ENCODE measurements at regions of chr16 and their contacts with region 1.

Region 1: DNA sequence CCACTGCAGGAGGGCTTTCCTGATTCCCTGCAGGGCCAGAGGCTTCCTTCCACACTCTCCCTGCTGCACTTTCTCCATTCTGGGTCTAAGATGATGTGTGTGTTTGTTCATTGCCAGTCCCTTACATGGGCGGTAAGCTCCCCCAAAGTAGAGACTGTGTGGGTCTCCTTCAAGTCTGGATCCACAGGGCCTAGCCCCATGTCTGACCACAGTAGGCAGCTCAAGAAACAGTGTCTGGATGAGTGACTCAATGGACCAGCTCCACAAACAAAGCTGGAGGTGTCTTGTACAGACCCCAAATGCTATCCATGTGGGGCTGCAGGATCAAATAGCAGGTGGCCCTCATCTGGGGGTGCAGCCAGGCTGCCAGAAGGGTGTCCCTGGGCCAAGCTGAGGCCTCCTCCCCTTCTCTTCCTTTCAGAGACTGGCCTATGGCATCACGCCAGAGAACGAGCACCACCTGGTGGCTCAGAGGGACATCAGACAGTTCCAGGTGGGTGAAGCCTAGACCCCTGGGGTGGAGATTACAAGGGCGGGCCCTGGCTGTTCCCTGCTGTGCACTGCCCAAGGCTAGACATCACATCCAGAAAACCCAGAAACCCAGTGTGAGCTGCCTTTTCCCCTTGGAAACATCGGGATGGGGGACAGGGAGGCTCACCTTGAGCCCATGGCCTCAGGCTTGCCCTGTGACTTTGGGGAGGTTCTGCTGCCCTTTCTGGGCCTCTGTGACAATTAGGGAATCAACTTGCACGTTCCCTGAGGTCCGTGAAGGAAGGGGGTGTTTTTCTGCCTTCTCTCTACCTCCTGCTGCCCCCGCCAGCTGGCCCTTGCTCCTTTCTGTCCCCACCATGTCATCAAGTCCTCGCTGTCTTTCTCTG is 45.9 kb downstream of the SLC6A2 start:
- DNase-seq: peak; percentile 38
- H3K4me3 ChIP-seq: no peak overlapping the region
- H3K27ac ChIP-seq: no peak overlapping the region
- H3K4me1 ChIP-seq: peaks cover 2% of the 10 kb centered on the region
- H3K27me3 ChIP-seq: no peaks in the 10 kb centered on the region
- CTCF ChIP-seq: peak; percentile 56 to 86

Region 2: GRCh38 chr16:55453909-55454308 is 247.8 kb before region 1 on chr16:
- CTCF ChIA-PET with region 1: no interaction called
- dilution Hi-C with region 1: no loop called
- in situ Hi-C with region 1: no loop called
- intact Hi-C with region 1: no loop called
- DNase-seq: no peak
- H3K4me3 ChIP-seq: no peak overlapping the region
- H3K27ac ChIP-seq: no peak overlapping the region
- H3K4me1 ChIP-seq: no peaks in the 10 kb centered on the region
- H3K27me3 ChIP-seq: no peaks in the 10 kb centered on the region
- CTCF ChIP-seq: no peak

Region 3: GRCh38 chr16:55494994-55495421 is 206.7 kb before region 1 on chr16:
- CTCF ChIA-PET with region 1: interaction called, 5 read pairs
- dilution Hi-C with region 1: no loop called
- in situ Hi-C with region 1: loop called in 1 of 2 experiments (anchors 5 kb)
- intact Hi-C with region 1: loop called (anchors 1 kb)
- DNase-seq: peak; percentile 70
- H3K4me3 ChIP-seq: no peak overlapping the region
- H3K27ac ChIP-seq: no peak overlapping the region
- H3K4me1 ChIP-seq: peaks cover 32% of the 10 kb centered on the region
- H3K27me3 ChIP-seq: no peaks in the 10 kb centered on the region
- CTCF ChIP-seq: peak; percentile 53 to 71

Region 4: GRCh38 chr16:55543472-55543871 is 158.2 kb before region 1 on chr16:
- CTCF ChIA-PET with region 1: interaction called, 3 read pairs
- dilution Hi-C with region 1: no loop called
- in situ Hi-C with region 1: loop called in 1 of 2 experiments (anchors 5 kb)
- intact Hi-C with region 1: loop called (anchors 1 kb)
- DNase-seq: no peak
- H3K4me3 ChIP-seq: no peak overlapping the region
- H3K27ac ChIP-seq: no peak overlapping the region
- H3K4me1 ChIP-seq: peaks cover 25% of the 10 kb centered on the region
- H3K27me3 ChIP-seq: no peaks in the 10 kb centered on the region
- CTCF ChIP-seq: peak; percentile 11 to 35

Region 5: DNA sequence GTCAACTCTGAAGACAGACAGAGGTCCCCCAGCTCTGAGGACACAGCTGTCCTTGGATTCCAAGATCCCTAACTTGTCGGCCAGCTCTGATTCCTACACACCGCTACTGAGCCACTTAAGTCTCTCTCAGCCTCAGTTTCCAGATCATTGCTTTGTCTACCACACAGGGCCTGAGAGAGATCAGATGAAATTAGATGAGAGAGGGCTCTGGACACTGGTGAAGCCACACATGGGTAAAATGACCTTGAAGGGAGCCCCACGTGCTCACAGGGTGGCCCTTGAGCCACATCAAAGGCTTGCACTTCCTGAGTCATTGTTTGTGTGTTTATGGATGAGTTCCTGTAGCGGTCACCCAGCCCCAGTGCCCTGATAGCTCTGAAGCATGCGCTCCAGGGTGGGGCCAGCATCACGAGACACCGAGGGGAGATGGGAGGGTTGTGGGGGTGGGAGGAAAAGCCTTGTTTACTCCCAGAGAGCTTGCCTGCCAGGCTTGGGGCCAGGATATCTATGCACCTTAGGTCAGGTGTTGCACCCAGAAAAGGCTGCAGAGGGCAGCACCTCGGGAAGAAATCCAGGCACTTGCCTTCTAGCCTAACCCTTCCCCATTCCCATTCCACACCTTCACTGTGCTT is 78.6 kb before region 1 on chr16:
- CTCF ChIA-PET with region 1: no interaction called
- dilution Hi-C with region 1: loop called (anchors 5 kb)
- in situ Hi-C with region 1: no loop called
- intact Hi-C with region 1: loop called (anchors 1 kb)
- DNase-seq: peak; percentile 20
- H3K4me3 ChIP-seq: no peak overlapping the region
- H3K27ac ChIP-seq: no peak overlapping the region
- H3K4me1 ChIP-seq: no peaks in the 10 kb centered on the region
- H3K27me3 ChIP-seq: no peaks in the 10 kb centered on the region
- CTCF ChIP-seq: peak; percentile 52 to 63

Region 6: DNA sequence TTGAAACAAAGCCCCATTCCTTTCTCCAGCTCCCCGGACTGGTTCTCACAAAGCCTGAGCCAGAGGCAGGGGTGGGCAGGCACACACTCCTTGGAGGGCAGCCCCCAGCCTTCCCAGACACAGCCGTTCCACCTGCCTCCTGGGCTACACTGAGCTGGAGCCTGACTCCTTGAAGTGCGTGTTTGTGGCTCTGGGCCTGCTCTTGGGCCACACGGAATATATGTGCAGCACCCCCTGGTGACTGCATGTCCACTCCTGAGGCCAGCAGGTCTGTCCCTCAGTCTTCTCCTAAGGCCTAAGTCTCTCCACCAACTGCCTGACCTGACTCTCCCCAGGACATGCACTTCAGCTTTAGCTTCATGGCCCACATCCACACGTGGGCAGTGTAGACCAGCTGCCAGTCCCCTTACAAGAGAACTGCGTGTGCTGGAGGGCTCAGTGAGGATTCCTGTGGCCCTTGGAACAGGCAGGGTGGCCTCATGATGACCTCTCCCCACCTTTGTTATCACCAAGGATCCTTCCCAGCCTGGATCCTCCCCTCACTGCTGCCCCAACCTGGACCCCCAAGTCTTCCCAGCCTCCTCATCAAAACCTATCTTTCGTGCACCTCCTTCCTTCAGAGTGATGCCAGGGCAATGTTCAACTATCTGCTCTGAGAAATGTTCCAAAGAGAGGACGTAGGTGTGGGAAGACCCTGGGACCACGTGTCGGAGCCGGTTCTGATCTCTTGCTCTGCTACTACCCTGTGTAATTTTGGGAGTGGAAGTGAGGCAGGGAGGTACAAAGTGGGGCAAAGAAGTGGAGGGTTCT is 58.3 kb before region 1 on chr16:
- CTCF ChIA-PET with region 1: no interaction called
- dilution Hi-C with region 1: no loop called
- in situ Hi-C with region 1: no loop called
- intact Hi-C with region 1: loop called (anchors 2 kb)
- DNase-seq: no peak
- H3K4me3 ChIP-seq: no peak overlapping the region
- H3K27ac ChIP-seq: no peak overlapping the region
- H3K4me1 ChIP-seq: no peaks in the 10 kb centered on the region
- H3K27me3 ChIP-seq: no peaks in the 10 kb centered on the region
- CTCF ChIP-seq: peak in 1 of 2 donors; percentile 19

Region 7: DNA sequence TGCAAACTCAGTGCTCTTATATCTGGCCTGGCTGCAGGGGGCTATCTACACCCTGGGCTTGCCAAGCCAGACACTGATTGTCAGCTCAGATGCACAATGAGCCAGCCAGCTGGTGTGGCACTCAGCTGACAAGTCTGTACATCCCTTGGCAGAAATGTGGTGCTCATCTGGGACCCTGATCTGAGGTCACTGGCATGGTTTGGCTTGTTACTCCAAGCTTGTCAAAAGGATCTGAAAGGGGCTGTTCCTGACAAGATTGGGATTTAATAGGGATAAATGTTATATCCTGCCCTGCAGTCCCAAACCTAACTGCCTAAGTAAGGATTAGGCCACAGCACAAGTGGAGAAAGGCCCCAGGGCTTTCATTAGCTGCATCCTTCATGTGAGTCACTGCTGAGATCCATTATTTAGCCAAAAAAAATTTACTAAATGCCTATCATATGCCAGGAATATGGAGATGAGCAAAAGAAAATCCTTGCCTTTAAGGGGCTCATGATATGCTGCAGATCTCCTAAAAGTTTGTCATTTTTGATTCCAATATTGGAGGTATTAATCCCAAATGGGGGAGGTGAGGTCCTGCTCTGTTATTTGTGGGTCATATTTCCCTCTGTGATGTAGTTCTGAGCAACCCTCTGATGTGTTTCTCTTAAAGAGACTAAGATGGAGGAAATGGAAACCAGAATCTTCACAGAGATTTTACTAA is 39.6 kb before region 1 on chr16:
- CTCF ChIA-PET with region 1: no interaction called
- dilution Hi-C with region 1: no loop called
- in situ Hi-C with region 1: no loop called
- intact Hi-C with region 1: loop called (anchors 2 kb)
- DNase-seq: peak; percentile 59
- H3K4me3 ChIP-seq: no peak overlapping the region
- H3K27ac ChIP-seq: no peak overlapping the region
- H3K4me1 ChIP-seq: peaks cover 34% of the 10 kb centered on the region
- H3K27me3 ChIP-seq: no peaks in the 10 kb centered on the region
- CTCF ChIP-seq: no peak

Region 8: GRCh38 chr16:55773859-55774549 is 72.3 kb after region 1 on chr16:
- CTCF ChIA-PET with region 1: no interaction called
- dilution Hi-C with region 1: no loop called
- in situ Hi-C with region 1: no loop called
- intact Hi-C with region 1: no loop called
- DNase-seq: peak; percentile 63
- H3K4me3 ChIP-seq: no peak overlapping the region
- H3K27ac ChIP-seq: no peak overlapping the region
- H3K4me1 ChIP-seq: peaks cover 5% of the 10 kb centered on the region
- H3K27me3 ChIP-seq: no peaks in the 10 kb centered on the region
- CTCF ChIP-seq: no peak

Region 9: DNA sequence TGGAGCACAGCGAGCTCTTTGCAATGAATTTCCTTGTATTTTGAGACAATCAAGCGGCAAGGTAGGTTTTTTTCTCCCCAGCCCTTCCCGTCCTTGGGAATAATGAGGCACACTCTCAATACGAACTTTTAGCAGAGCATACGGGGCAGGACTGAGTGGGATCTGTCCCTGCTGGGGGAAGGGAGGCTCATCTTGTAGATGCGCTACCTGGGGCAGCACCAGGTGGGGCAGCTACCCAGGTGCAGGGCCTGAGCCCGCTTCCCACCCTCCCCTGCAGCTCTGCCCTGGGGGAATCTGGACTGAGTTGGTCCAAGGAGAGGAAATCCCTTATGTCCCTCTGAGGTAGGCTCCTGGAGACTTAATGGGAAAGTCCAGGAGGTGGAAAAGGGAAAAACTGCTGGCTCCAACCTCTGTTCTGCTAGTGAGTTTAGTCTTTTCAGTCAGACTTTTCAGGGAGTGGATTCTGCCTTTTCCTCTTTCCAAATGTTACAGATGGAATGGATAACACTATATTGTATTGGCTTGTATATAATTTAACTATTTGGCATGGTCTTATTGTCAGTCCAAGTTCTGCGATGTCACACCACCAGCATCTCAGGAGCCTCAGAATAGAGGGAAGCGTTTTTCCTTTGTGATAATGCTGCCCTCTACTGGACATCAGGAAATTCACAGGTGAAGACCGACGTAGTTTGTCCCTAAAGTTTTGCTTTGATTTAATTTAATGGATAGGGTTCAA is 140.9 kb after region 1 on chr16:
- CTCF ChIA-PET with region 1: no interaction called
- dilution Hi-C with region 1: no loop called
- in situ Hi-C with region 1: loop called in 1 of 2 experiments (anchors 10 kb)
- intact Hi-C with region 1: no loop called
- DNase-seq: peak; percentile 16
- H3K4me3 ChIP-seq: no peak overlapping the region
- H3K27ac ChIP-seq: no peak overlapping the region
- H3K4me1 ChIP-seq: no peaks in the 10 kb centered on the region
- H3K27me3 ChIP-seq: peaks cover 2% of the 10 kb centered on the region
- CTCF ChIP-seq: peak; percentile 51 to 68

Measured in mammary epithelial cell (primary cell).